Psoas muscle (tissue), 8 donors: ENCODE measurements at regions of chr18 and their contacts with region 1.

Region 1: GRCh38 chr18:63936156-63936931 is 12.8 kb upstream of the HMSD start:
- DNase-seq: peak; percentile 75 to 87
- ATAC-seq: peak; percentile 60 to 93 (median 88)
- H3K4me3 ChIP-seq: peak overlapping the region; percentile 58
- H3K27ac ChIP-seq: no peak overlapping the region
- H3K4me1 ChIP-seq: no peaks in the 10 kb centered on the region
- H3K27me3 ChIP-seq: peaks cover 5 to 34% (median 14%) of the 10 kb centered on the region in 3 donors
- CTCF ChIP-seq: peak; percentile 53

Region 2: GRCh38 chr18:63518178-63519012 is 417.9 kb before region 1 on chr18:
- intact Hi-C with region 1: loop called (anchors 5 kb)
- DNase-seq: no peak
- ATAC-seq: peak; percentile 61 to 85 (median 66)
- H3K4me3 ChIP-seq: no peak overlapping the region
- H3K27ac ChIP-seq: no peak overlapping the region
- H3K4me1 ChIP-seq: no peaks in the 10 kb centered on the region
- H3K27me3 ChIP-seq: no peaks in the 10 kb centered on the region
- CTCF ChIP-seq: peak; percentile 72

Region 3: DNA sequence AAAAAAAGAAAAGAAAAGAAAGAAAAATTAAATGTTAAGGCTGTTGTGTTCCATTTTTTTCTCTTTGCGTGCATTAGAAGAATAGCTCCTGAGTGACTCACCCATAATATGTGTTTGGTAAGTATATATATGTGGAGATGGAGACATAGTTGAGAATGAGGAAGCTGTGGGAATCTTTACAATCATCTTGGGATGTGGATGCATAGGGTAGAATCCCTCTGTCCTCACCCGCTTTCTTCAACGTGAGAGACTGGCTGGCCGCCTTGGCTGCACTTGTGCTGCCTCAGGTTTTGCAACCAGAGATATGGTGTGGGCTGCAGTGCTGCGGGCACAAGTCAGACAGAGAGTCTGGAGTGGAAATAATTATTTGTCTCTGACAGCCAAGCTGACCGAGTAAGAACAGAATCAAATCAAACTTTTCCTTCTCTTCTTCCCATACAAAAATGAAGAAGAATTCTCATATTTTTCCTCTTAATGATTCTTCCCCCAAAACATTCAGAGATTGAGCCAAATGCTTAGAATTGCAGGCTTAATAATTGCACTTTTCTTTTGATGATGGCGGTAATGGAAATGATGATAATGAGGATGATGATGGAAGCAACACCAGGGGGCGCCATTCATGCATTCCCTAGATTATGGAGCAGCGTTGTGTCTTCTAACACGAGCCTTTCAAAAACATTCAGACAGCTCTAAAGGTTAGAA is 112.7 kb before region 1 on chr18:
- intact Hi-C with region 1: loop called in 1 of 2 experiments (anchors 10 kb)
- DNase-seq: peak in 1 of 2 donors; percentile 20
- ATAC-seq: no peak
- H3K4me3 ChIP-seq: no peak overlapping the region
- H3K27ac ChIP-seq: no peak overlapping the region
- H3K4me1 ChIP-seq: no peaks in the 10 kb centered on the region
- H3K27me3 ChIP-seq: peaks cover 0 to 2% (median 0%) of the 10 kb centered on the region in 3 donors
- CTCF ChIP-seq: no peak

Region 4: GRCh38 chr18:63994783-63995399 is 58.5 kb after region 1 on chr18:
- intact Hi-C with region 1: no loop called
- DNase-seq: no peak
- ATAC-seq: peak in 2 of 4 donors; percentile 44 to 48
- H3K4me3 ChIP-seq: no peak overlapping the region
- H3K27ac ChIP-seq: no peak overlapping the region
- H3K4me1 ChIP-seq: no peaks in the 10 kb centered on the region
- H3K27me3 ChIP-seq: no peaks in the 10 kb centered on the region
- CTCF ChIP-seq: peak; percentile 69